ENCODE measurements at regions of chr10 and their contacts with region 1.

Region 1: DNA sequence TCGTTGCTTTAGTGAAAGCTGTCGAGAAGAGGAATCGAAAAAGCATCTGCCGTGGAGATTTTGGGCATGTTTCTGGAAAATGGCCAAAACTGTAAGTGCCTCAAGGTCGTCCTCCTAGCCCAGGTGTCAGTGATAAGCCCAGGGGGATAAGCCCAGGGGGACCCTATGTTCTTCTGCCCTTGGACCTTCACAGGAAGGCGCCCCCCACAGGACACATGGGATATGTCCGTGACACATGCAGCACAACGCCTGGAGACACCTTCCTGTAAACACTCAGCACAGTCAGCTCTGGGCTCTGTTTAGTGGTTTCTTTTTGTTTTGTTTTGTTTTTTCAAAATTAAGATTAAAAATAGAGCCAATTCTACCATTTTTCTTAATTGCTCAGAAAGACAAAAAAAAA is 272.7 kb downstream of the KLF6 start:
- DNase-seq: peak in 1 of 2 experiments; percentile 61
- H3K4me3 ChIP-seq: no peak overlapping the region
- H3K27ac ChIP-seq: no peak overlapping the region
- H3K4me1 ChIP-seq: no peaks in the 10 kb centered on the region
- H3K27me3 ChIP-seq: no peaks in the 10 kb centered on the region
- CTCF ChIP-seq: peak; percentile 49 to 67 (median 65)
- EP300 ChIP-seq: no peak
- POLR2A ChIP-seq: no peak
- RAD21 ChIP-seq: peak; percentile 32 to 56; a peak in 3 of 4 replicates

Region 2: GRCh38 chr10:3527869-3528268 is 15.6 kb after region 1 on chr10:
- CTCF ChIA-PET with region 1: interaction called, 12 read pairs
- POLR2A ChIA-PET with region 1: no interaction called
- DNase-seq: no peak
- H3K4me3 ChIP-seq: no peak overlapping the region
- H3K27ac ChIP-seq: no peak overlapping the region
- H3K4me1 ChIP-seq: no peaks in the 10 kb centered on the region; a peak in 1 of 7 replicates
- H3K27me3 ChIP-seq: no peaks in the 10 kb centered on the region
- CTCF ChIP-seq: no peak
- EP300 ChIP-seq: no peak
- POLR2A ChIP-seq: no peak
- RAD21 ChIP-seq: no peak

Measured in H1 (cell line).